ENCODE measurements at regions of chr3 and their contacts with region 1.

Region 1: GRCh38 chr3:30440147-30440604 is 166.2 kb upstream of the TGFBR2 start:
- DNase-seq: no peak
- H3K4me3 ChIP-seq: no peak overlapping the region
- H3K27ac ChIP-seq: peak overlapping the region; percentile 76 to 77
- H3K4me1 ChIP-seq: peaks cover 0 to 99% (median 58%) of the 10 kb centered on the region in 4 donors
- H3K27me3 ChIP-seq: no peaks in the 10 kb centered on the region
- CTCF ChIP-seq: no peak

Region 2: DNA sequence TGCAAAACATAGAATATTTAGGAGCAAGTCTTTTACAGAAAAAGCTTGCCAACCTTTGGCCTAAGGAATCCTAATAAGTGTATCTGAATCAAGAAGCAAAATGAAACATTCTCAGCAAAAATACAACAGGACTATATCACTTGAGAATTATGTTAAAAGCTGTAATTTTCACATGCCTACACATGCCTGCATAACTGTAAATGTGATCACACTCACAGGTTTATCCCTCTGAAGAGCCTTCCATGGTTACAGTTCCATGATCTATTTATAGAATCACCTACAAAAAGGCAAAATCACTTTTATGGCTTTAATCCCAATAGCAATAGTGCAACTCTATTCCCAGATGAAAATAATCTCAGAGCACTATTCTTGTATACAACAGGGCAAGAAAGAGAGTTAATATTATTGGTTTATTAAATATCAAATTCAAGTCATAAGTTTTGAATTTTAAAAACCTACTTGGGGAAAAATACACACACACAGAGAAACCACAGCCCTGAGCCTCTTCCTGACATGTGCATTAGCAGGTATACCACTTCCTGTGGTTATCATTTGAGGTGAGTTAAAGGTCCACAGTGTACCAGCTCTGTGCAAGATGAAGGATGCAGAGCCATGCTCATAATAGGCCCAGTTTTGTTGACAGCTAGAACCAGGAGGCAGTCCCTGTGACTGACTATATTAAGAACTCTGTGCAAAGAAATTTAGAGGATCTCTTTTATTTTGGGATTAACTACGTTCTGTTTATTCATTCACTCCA is 86.3 kb before region 1 on chr3:
- intact Hi-C with region 1: loop called (anchors 10 kb)
- DNase-seq: no peak
- H3K4me3 ChIP-seq: no peak overlapping the region
- H3K27ac ChIP-seq: peak overlapping the region; percentile 64 to 76
- H3K4me1 ChIP-seq: peaks cover 0 to 88% (median 27%) of the 10 kb centered on the region in 4 donors
- H3K27me3 ChIP-seq: no peaks in the 10 kb centered on the region
- CTCF ChIP-seq: no peak

Measured in tibial artery (tissue), 4 donors.